ENCODE measurements at regions of chr3 and their contacts with region 1.

Region 1: DNA sequence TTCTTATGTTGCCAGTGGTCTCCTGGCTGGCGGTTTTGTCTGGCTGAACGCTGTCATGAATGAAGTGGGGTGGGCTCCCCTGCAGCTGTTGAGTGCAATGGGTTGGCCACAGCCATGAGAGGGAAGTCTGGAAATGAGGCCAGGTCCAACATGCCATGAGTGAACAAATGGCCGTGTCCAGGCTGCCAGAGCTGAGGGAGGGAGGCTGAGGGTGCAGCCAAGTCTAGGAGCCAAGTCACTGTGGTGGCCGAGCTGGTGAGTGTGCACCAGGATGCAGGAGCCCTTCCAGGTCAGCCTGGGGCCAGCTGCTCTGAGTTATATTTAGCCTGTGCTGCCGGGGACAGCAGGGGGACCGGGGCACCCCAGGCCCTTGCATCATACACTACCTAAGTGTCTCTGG is 24.7 kb upstream of the PRR23E start:
- DNase-seq: peak; percentile 37 to 84
- ATAC-seq: peak; percentile 75 to 95
- H3K4me3 ChIP-seq: no peak overlapping the region
- H3K27ac ChIP-seq: peak overlapping the region in 3 of 4 donors; percentile 30 to 62 (median 43)
- H3K4me1 ChIP-seq: peaks cover 11 to 12% of the 10 kb centered on the region in 2 donors
- H3K27me3 ChIP-seq: no peaks in the 10 kb centered on the region
- CTCF ChIP-seq: no peak
- POLR2A ChIP-seq: no peak

Region 2: DNA sequence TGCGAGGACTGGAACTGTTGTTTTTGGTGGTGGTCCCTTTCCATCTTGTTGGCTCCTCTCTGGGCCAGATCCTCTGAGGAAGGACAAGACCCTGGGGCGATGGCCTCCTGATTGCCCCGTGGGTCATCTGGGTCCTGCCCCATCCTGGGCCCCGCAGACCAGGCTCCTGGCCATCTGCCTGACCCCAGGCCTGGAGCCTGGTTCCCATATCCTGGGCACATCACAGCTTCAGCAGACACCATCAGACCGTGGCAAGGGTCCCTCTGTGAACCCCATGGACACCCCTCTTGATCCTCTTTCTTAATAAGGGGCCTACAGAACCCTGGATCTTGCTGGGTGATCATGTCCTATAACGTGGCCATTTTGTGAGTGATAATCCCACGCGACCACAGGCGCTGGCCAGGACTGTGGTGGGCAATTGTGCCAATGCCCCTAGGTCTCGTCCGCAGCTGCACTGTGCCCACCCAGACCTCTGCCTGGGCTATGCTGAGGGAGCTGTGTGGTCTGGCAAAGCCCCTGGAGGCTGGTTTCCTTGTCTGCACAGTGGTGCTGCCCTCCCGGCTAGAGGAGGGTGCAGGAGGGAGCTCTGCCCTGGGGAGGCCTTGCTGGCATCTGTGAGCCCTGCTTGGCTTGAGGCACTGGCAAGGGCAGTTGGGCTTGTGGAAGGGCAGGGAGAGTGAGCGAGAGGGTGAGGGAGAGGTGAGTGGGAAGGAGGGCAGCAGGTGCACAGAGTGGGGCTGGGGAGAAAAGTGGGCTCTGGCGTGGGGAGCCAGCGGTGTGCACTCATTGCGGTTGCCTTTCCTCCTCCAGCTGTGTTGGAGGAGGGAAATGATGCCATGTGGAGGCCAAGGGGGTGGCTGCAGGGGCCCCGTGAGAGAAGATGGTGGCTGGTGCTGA is 28.4 kb before region 1 on chr3:
- in situ Hi-C with region 1: no loop called
- intact Hi-C with region 1: loop called (anchors 1 kb)
- DNase-seq: no peak
- ATAC-seq: no peak
- H3K4me3 ChIP-seq: no peak overlapping the region
- H3K27ac ChIP-seq: peak overlapping the region in 1 of 4 donors; percentile 71
- H3K4me1 ChIP-seq: peaks cover 12 to 29% of the 10 kb centered on the region in 2 donors
- H3K27me3 ChIP-seq: no peaks in the 10 kb centered on the region
- CTCF ChIP-seq: no peak
- POLR2A ChIP-seq: no peak